Endothelial cell of umbilical vein (primary cell): ENCODE measurements at regions of chr18 and their contacts with region 1.

Region 1: GRCh38 chr18:20971886-20972267 is 139.7 kb downstream of the ROCK1 start:
- DNase-seq: peak; percentile 42
- H3K4me3 ChIP-seq: no peak overlapping the region
- H3K27ac ChIP-seq: no peak overlapping the region
- H3K4me1 ChIP-seq: no peaks in the 10 kb centered on the region
- H3K27me3 ChIP-seq: no peaks in the 10 kb centered on the region
- CTCF ChIP-seq: peak; percentile 25 to 53
- POLR2A ChIP-seq: no peak

Region 2: DNA sequence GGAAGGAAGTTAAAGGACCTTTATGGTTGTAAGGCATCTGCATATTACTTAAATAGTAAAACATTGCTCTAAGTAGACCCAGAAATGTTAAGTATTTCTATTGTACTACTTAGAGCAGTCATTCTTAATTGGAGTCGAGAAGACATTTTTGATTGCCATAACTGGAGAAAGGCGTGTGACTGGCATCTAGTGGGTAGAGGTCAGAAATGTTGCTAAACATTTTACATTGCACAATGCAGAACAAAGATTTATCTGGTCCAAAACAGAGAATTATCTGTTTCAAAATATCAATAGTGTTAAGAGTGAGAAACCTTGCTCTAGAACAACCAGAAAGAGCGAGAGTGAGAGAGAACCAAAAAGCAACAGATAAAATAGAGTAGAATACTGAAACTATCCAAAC is 163.0 kb after region 1 on chr18:
- CTCF ChIA-PET with region 1: no interaction called
- POLR2A ChIA-PET with region 1: no interaction called
- dilution Hi-C with region 1: no loop called
- intact Hi-C with region 1: loop called (anchors 1 kb)
- DNase-seq: peak; percentile 50
- H3K4me3 ChIP-seq: no peak overlapping the region
- H3K27ac ChIP-seq: no peak overlapping the region
- H3K4me1 ChIP-seq: no peaks in the 10 kb centered on the region
- H3K27me3 ChIP-seq: no peaks in the 10 kb centered on the region
- CTCF ChIP-seq: peak in 1 of 2 donors; percentile 33
- POLR2A ChIP-seq: no peak

Region 3: DNA sequence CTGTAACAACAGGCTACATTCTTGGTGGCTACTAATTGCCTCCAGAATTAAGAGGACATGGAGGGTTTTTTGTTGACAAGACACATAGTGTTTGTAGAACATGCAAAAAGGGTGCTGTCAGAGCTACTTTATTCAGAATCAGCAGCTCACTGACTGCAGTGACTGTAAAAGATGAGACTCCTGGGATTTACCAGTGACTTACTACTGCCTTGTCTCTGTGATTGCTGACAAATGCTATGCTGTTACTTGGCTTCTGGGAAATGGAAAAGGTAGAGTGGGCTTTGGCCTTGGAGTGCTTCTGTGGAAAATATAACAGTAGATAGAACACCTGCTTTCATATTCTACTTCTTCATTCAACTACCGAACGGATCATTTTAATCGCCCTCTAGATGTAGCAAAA is 317.9 kb after region 1 on chr18:
- CTCF ChIA-PET with region 1: no interaction called
- POLR2A ChIA-PET with region 1: no interaction called
- dilution Hi-C with region 1: no loop called
- intact Hi-C with region 1: no loop called
- DNase-seq: no peak
- H3K4me3 ChIP-seq: no peak overlapping the region
- H3K27ac ChIP-seq: no peak overlapping the region
- H3K4me1 ChIP-seq: no peaks in the 10 kb centered on the region
- H3K27me3 ChIP-seq: peaks cover 0 to 5% of the 10 kb centered on the region in 2 experiments
- CTCF ChIP-seq: no peak
- POLR2A ChIP-seq: no peak

Region 4: GRCh38 chr18:21548637-21549036 is 576.8 kb after region 1 on chr18:
- CTCF ChIA-PET with region 1: no interaction called
- POLR2A ChIA-PET with region 1: no interaction called
- dilution Hi-C with region 1: no loop called
- intact Hi-C with region 1: no loop called
- DNase-seq: no peak
- H3K4me3 ChIP-seq: no peak overlapping the region
- H3K27ac ChIP-seq: no peak overlapping the region
- H3K4me1 ChIP-seq: no peaks in the 10 kb centered on the region
- H3K27me3 ChIP-seq: no peaks in the 10 kb centered on the region
- CTCF ChIP-seq: no peak
- POLR2A ChIP-seq: no peak

Region 5: DNA sequence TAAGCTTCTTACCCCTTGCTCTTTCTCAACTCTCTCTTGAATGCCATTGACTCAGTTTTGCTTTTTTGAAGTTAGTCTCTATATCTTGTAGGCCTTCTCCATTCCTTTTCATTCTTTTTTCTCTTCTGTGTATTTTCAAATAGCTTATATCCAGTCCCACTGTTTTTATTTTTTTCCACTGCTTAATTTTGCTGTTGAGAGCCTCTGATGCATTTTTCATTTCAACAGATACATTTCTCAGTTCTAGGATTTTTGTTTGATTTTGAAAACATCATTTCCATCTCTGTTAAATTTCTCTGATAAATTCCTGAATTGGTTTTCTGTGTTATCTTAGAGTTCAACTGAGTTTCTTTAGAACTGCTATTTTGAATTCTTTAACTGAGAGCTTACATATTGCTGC is 814.6 kb after region 1 on chr18:
- CTCF ChIA-PET with region 1: no interaction called
- POLR2A ChIA-PET with region 1: no interaction called
- dilution Hi-C with region 1: no loop called
- intact Hi-C with region 1: no loop called
- DNase-seq: no peak
- H3K4me3 ChIP-seq: no peak overlapping the region
- H3K27ac ChIP-seq: no peak overlapping the region
- H3K4me1 ChIP-seq: no peaks in the 10 kb centered on the region
- H3K27me3 ChIP-seq: no peaks in the 10 kb centered on the region
- CTCF ChIP-seq: no peak
- POLR2A ChIP-seq: no peak